ENCODE measurements at regions of chr16 and their contacts with region 1.

Region 1: GRCh38 chr16:31327646-31328242 is 27.2 kb upstream of the ITGAX start:
- DNase-seq: no peak
- CTCF ChIP-seq: no peak

Region 2: GRCh38 chr16:31273676-31274075 is 54.1 kb before region 1 on chr16:
- in situ Hi-C with region 1: loop called (anchors 10 kb)
- DNase-seq: no peak
- CTCF ChIP-seq: no peak

Measured in GM13977 (cell line).